Activated B cell treated with CpG ODN at 0.5 μM for 24 hours (primary cell): ENCODE measurements at regions of chr10 and their contacts with region 1.

Region 1: DNA sequence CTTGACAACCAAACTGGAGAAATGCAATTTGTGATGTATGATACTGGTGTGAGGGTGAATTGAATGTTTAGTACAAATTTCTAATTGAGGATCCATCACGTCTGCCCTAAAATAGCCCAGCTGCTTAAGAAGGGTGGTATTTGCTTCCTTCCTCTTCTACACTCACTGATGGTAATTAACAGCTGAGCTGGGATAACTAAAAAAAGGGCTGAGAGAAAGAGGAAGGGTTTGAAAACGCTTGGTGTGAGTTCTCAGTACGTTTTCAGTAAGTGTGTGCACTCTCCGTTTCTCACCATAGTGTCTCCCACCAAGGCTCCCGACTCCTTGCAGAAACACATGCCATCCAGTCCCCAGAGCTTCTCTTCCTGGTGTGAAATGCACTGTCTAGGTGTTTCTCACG is 54.3 kb downstream of the MAP3K8 start:
- DNase-seq: no peak
- ATAC-seq: peak; percentile 70
- H3K4me3 Mint-ChIP-seq: peak overlapping the region; percentile 66
- H3K27ac Mint-ChIP-seq: peak overlapping the region; percentile 89
- H3K4me1 Mint-ChIP-seq: peaks cover 63% of the 10 kb centered on the region
- H3K27me3 Mint-ChIP-seq: no peaks in the 10 kb centered on the region
- CTCF ChIP-seq: no peak

Region 2: DNA sequence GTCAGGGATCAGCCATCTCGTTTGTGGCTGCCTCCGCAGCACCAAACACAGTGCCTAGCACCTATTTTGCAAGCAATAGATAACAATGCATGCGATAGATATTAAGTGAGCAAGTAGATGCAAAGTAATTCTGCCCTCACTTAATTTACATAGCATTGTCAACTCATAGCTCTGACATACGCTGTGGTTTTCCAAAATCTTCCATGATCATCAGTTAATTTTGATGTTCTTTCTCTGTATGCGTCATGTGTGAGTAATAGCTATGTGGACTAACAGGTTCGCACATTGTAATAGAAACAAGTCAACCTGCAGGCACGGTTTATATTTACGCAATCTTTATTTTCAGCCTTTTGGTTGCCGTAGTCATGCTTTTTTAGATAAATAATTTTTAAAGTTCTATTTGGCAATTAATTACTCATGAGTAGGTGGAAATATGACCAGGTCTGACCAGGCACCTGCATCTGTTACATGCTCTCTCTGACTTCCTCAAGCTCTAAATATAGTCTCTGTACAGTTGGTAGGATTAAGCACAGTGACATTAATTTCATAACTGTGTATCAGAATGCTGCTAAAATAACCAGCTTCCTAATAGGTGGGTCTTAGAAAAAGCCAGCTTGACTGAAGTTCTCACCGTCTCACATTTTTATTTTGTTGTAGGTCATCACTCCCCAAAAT is 41.1 kb before region 1 on chr10:
- CTCF ChIA-PET with region 1: interaction called, 3 read pairs
- POLR2A ChIA-PET with region 1: interaction called, 3 read pairs
- intact Hi-C with region 1: loop called (anchors 2 kb)
- DNase-seq: no peak
- ATAC-seq: peak; percentile 34
- H3K4me3 Mint-ChIP-seq: peak overlapping the region; percentile 24
- H3K27ac Mint-ChIP-seq: peak overlapping the region; percentile 59
- H3K4me1 Mint-ChIP-seq: peaks cover 59% of the 10 kb centered on the region
- H3K27me3 Mint-ChIP-seq: no peaks in the 10 kb centered on the region
- CTCF ChIP-seq: no peak

Region 3: DNA sequence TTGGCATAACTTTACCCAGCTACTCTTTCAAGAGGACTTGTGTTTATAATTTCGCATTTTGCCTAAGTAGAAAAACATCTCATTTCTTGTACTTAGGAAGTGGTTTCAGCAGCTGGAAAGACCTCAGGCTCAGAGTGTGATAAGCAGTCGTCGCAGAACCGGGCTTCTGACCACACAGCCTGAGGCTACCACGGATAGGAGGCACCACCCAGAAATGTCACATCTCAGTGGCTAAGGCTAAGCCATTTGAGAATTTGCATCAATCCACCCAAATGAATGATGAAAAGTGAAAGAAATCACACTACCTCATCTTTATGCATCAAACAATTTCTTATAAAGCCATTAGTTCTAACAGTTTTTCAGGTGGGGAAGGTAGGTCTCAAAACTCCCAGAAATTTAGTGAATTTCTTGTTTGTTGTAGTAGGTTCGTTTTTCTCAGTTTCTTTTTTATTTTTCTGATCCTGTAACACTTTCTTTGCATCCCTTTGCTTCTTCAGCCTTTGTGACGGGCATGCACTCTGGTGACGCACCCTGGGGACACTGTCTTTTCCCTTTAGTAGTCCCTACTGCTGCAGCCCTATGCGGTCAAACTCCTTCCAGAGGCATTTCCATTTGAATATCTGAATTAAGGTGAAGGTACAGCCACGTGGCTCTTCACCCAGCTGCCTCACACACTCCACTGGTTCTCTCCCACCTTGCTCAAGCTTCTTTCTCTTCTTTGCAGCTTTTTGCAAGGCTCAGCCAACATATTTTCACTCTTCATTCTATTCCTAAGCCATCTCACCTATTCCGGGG is 14.1 kb after region 1 on chr10:
- CTCF ChIA-PET with region 1: interaction called, 5 read pairs
- POLR2A ChIA-PET with region 1: interaction called, 16 read pairs
- intact Hi-C with region 1: loop called (anchors 2 kb)
- DNase-seq: no peak
- ATAC-seq: peak; percentile 85
- H3K4me3 Mint-ChIP-seq: peak overlapping the region; percentile 79
- H3K27ac Mint-ChIP-seq: peak overlapping the region; percentile 83
- H3K4me1 Mint-ChIP-seq: peaks cover 89% of the 10 kb centered on the region
- H3K27me3 Mint-ChIP-seq: no peaks in the 10 kb centered on the region
- CTCF ChIP-seq: no peak